ENCODE measurements at regions of chr5 and their contacts with region 1.

Region 1: GRCh38 chr5:140710899-140711552 is 10.8 kb downstream of the ZMAT2 start:
- DNase-seq: peak; percentile 76 to 97
- H3K4me3 ChIP-seq: peak overlapping the region; percentile 64 to 71
- H3K27ac ChIP-seq: peak overlapping the region; percentile 90 to 94
- H3K4me1 ChIP-seq: peaks cover 0 to 4% of the 10 kb centered on the region in 2 donors
- H3K27me3 ChIP-seq: no peaks in the 10 kb centered on the region
- CTCF ChIP-seq: no peak

Region 2: GRCh38 chr5:140372971-140373487 is 338.0 kb before region 1 on chr5:
- intact Hi-C with region 1: loop called (anchors 10 kb)
- DNase-seq: peak in 1 of 2 donors; percentile 85
- H3K4me3 ChIP-seq: no peak overlapping the region
- H3K27ac ChIP-seq: no peak overlapping the region
- H3K4me1 ChIP-seq: peaks cover 0 to 3% of the 10 kb centered on the region in 2 donors
- H3K27me3 ChIP-seq: no peaks in the 10 kb centered on the region
- CTCF ChIP-seq: peak; percentile 65 to 84 (median 82)

Region 3: DNA sequence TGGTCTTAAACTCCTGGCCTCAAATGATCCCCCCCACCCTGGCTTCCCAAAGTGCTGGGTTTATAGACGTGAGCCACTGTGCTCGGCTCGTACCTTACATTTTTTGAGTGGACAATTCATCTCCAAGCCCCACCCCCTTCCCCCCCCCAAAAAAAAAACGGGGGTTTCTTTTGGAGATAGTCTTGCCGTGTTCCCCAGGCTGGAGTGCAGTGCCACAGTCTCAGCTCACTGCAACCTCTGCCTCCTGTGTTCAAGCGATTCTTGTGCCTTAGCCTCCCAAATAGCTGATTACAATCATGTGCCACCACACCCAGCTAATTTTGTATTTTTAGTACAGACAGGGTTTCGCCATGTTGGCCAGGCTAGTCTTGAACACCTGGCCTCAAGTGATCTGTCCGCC is 278.1 kb before region 1 on chr5:
- intact Hi-C with region 1: no loop called
- DNase-seq: no peak
- H3K4me3 ChIP-seq: no peak overlapping the region
- H3K27ac ChIP-seq: no peak overlapping the region
- H3K4me1 ChIP-seq: no peaks in the 10 kb centered on the region
- H3K27me3 ChIP-seq: no peaks in the 10 kb centered on the region
- CTCF ChIP-seq: no peak

Region 4: DNA sequence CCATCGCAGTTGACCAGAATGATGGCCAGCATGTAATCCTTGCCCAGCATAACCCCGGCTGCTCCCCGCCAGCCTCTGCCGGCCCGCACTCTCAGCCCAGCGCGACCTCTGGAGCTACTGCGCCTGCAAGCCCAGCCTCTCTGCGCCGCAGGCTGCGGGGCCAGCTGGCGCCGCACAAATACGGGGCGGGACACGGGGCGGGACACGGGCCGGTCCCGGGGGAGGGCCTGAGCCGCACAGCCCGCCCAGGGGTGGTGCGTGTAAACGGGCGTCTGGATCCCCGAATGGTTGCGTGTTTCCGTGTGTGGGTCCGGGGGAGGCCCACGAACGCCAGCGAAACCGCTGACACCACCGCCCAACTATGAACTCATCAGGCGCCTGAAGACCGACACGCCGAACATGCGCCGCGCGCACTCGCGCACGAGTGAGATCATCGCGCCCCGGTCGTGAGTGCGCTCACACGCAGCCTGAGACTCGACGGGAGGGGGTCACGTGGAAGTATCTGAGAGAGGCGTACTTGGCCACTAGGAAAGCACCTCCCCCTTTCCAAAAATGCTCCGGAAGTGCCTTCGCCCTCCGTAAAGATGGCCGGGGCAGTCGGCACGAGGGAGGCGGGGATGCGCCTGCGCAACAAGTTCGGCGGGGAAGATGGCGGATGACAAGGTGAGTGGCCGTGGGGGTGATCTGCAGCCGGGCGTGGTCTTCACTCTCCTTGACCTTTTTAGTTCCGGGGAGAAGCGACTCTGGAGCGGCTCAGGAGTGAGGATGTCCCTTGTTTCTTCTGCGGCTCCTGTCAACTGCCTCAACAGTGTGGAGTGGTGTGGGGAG is 146.6 kb before region 1 on chr5 and contains the starts of genes APBB3 and SLC35A4:
- intact Hi-C with region 1: loop called (anchors 2 kb)
- DNase-seq: peak; percentile 96 to 99
- H3K4me3 ChIP-seq: peak within 1 kb of the TSS; percentile 88 to 92
- H3K27ac ChIP-seq: peak within 1 kb of the TSS; percentile 92 to 93
- H3K4me1 ChIP-seq: peaks cover 16 to 24% of the 10 kb centered on the region in 2 donors
- H3K27me3 ChIP-seq: no peaks in the 10 kb centered on the region
- CTCF ChIP-seq: no peak
- total RNA-seq, gene APBB3: 47.3 TPM
- total RNA-seq, gene SLC35A4: 46.2 TPM

Region 5: GRCh38 chr5:140700177-140701144 is 10.6 kb before region 1 on chr5 and contains the start of gene ZMAT2:
- intact Hi-C with region 1: loop called (anchors 1 kb)
- DNase-seq: peak; percentile 90 to 97
- H3K4me3 ChIP-seq: peak within 1 kb of the TSS; percentile 75 to 79
- H3K27ac ChIP-seq: peak within 1 kb of the TSS; percentile 71 to 76
- H3K4me1 ChIP-seq: peaks cover 3 to 14% of the 10 kb centered on the region in 2 donors
- H3K27me3 ChIP-seq: no peaks in the 10 kb centered on the region
- CTCF ChIP-seq: no peak
- total RNA-seq, gene ZMAT2: 15.5 TPM

Region 6: GRCh38 chr5:140725799-140726471 is 14.9 kb after region 1 on chr5:
- intact Hi-C with region 1: no loop called
- DNase-seq: peak in 1 of 2 donors; percentile 67
- H3K4me3 ChIP-seq: no peak overlapping the region
- H3K27ac ChIP-seq: no peak overlapping the region
- H3K4me1 ChIP-seq: no peaks in the 10 kb centered on the region
- H3K27me3 ChIP-seq: no peaks in the 10 kb centered on the region
- CTCF ChIP-seq: no peak

Region 7: DNA sequence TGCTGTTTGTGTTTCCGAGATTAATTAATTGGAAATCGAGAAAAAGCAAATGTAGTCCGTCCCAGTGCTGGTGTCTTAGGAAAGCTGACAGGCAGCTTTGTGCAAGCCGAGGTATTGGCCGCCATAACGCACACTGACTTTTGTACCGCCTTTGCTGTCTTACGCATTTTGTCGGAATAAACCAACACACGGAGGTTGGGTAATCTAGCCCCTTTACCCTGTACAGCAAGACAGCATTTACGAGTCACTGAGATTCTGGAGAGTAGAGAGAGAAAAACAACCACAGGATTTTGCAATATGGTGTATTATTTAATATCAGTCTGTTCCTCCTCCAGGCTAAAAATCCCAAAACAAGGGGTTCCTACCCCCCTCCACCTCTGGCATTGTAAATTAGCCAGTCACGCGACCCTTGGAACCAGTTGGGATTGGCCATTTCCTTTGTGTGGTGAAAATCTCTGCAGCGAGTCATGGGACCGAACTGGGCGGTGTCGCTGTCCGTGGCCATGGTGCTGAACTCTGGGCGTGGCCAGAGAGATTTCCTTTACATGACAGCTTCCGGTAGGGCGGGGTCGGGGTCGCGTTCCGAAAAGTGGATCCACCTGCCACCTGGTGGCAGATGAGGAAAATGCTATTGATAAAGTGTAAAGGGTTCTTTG is 329.9 kb after region 1 on chr5:
- intact Hi-C with region 1: loop called (anchors 1 kb)
- DNase-seq: peak; percentile 37 to 92
- H3K4me3 ChIP-seq: peak overlapping the region; percentile 41 to 42
- H3K27ac ChIP-seq: no peak overlapping the region
- H3K4me1 ChIP-seq: no peaks in the 10 kb centered on the region
- H3K27me3 ChIP-seq: no peaks in the 10 kb centered on the region
- CTCF ChIP-seq: peak; percentile 60 to 72 (median 65)

Region 8: GRCh38 chr5:141320225-141321169 is 609.5 kb after region 1 on chr5 and contains the start of gene TAF7:
- intact Hi-C with region 1: loop called (anchors 10 kb)
- DNase-seq: peak; percentile 47 to 91
- H3K4me3 ChIP-seq: peak within 1 kb of the TSS; percentile 76 to 92
- H3K27ac ChIP-seq: peak within 1 kb of the TSS; percentile 93 to 99
- H3K4me1 ChIP-seq: peaks cover 0 to 4% of the 10 kb centered on the region in 2 donors
- H3K27me3 ChIP-seq: no peaks in the 10 kb centered on the region
- CTCF ChIP-seq: peak; percentile 61 to 86 (median 86)
- total RNA-seq, gene TAF7: 30.1 TPM

Measured in ascending aorta (tissue), 2 donors.